ENCODE measurements at regions of chr10 and their contacts with region 1.

Region 1: DNA sequence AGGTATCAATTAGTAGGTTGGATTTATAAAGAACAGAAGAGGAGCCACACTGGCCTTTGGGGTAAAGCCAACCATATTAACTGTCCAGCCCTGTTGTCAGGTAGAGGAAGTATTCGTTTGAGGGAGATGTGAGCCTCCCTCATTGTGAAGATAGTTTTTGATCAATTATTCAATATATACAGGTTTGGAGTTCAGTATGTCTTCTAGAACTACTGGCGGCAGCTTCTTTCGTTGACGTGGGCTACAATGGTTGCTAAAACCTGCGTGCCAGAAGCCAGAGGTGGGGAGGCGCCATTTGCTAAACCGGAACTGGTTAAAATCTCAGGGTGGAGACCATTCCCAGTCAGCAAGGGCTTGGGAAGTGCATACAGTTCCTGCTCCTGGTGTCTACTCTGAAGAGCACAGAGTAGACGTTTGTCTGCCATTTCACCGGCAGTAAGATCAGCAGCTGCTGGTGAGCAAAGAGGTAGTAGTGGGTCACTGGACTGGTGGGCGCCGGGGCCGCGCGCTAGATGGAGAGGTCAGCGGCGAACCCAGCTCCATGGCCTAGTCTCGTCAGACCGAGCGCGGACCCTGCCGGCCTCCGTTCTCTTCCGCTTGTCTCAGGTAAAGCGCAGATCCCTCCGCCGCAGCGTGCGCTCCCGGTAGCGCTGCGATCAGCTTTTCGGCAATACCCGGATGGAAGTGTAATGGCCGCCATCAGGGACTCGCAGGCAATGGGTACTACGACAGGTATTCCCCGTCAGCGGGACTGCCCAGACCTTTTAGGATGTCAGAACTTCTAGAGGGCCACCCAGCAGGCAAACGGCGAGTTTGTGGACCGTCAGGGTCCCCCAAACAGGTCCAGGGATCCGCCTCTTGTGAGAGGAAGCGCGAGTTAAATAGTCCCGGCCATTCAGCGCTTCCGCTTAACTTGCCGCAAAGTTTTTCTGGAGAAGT is at the start of gene ZNF518A:
- DNase-seq: peak; percentile 96
- H3K4me3 ChIP-seq: peak within 1 kb of the TSS; percentile 70 to 81 (median 74)
- H3K27ac ChIP-seq: peak within 1 kb of the TSS; percentile 90 to 94 (median 92)
- H3K4me1 ChIP-seq: peaks cover 0 to 13% (median 9%) of the 10 kb centered on the region in 4 donors
- H3K27me3 ChIP-seq: peaks cover 0 to 43% (median 27%) of the 10 kb centered on the region in 3 donors
- CTCF ChIP-seq: no peak
- EP300 ChIP-seq: no peak
- POLR2A ChIP-seq: no peak
- total RNA-seq, gene ZNF518A: 13.2 to 22.8 (median 17.2) TPM

Region 2: DNA sequence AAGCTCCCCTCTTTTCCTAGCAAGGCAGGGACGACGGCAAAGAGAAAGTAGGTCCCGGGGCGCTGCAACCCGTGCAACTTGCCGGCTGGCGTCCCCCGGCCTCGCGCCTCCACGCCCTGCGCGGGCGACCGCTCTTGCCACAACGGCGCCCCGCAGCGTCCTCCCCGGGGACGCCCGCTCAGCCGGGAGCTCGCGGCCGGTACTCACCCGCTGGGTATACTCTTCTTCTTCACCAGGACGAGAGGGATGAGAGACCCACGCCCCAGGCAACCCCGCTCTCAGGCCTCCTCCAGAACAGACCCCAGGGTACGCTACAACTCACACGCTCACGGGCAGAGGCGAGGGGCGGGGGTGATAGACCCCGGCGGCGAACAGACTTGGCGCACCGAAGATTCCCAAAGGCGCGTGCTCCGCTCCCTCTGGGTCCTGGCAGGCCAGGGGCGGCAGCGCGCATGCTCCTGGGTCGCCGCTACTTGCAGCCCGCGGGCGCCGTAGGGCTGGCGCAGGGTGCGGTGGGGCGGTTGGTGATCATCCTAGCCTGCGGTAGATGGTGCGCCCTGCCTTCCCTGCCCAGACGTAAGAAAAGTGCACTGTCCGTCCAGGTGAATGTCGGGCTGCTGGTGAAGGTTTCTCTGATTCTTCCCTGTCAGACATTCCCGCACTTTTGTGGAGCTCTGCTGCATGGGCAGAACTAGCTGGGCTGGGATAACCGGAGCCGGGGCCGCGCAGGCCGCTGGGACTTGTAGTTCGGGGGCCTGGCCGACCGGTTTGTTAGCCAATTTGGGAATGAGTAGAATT is 222.0 kb before region 1 on chr10 and contains the start of gene CC2D2B:
- intact Hi-C with region 1: loop called (anchors 2 kb)
- DNase-seq: peak; percentile 90
- H3K4me3 ChIP-seq: peak within 1 kb of the TSS; percentile 43 to 70 (median 64)
- H3K27ac ChIP-seq: peak within 1 kb of the TSS; percentile 85 to 93 (median 90)
- H3K4me1 ChIP-seq: peaks cover 0 to 10% (median 4%) of the 10 kb centered on the region in 4 donors
- H3K27me3 ChIP-seq: no peaks in the 10 kb centered on the region
- CTCF ChIP-seq: no peak
- EP300 ChIP-seq: no peak
- POLR2A ChIP-seq: no peak
- total RNA-seq, gene CC2D2B: 1.5 to 7.8 (median 4.8) TPM

Region 3: GRCh38 chr10:96017191-96017687 is 112.4 kb before region 1 on chr10:
- intact Hi-C with region 1: loop called (anchors 5 kb)
- DNase-seq: no peak
- H3K4me3 ChIP-seq: no peak overlapping the region
- H3K27ac ChIP-seq: no peak overlapping the region
- H3K4me1 ChIP-seq: peaks cover 0 to 10% (median 7%) of the 10 kb centered on the region in 4 donors
- H3K27me3 ChIP-seq: no peaks in the 10 kb centered on the region
- CTCF ChIP-seq: peak; percentile 47 to 71 (median 58)
- EP300 ChIP-seq: peak in 2 of 4 donors; percentile 48 to 49
- POLR2A ChIP-seq: no peak

Region 4: DNA sequence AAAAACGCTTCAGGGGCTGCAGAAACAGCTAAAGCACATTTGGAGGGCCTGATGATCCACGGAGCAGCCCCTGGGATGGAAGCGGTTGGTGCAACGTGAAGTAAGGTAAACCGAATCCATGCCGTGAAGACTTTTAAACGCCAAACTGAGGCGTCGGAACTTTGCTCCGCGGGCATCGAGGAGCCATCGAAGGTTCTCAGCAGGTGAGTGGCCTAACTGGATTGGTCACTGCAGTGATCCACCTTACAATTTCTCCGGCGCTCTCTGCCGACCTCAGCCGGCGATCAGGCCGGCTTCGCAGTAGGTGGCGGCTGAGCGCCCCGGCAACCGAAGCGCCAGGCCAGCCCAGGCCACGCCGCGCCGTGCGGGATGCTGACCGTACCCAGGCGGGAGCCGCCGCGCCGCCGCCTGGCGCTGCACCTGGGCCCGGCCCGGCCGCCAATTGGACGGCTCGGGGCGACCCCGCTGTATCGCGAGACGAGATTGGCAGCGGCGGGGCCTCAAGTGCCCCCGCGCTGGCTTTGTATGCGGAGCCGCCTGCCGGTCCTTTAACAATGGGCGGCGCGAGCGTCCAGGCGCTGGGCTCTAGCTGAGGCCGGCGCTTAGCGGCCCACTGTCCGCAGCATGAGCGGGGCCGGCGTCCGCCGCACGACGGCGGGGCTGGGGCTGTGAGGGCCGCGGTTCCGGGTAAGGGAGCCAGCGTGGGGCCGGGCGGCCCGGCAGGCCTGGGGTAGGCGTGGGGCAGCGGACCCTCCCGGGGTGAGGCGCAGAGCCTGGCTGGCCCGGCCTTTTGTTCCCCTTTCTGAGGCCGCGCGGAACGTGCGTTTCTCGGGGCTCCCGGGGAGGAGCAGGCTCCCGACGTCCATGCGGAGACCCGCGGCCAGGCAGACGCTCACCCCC is 86.4 kb before region 1 on chr10 and contains the start of gene CCNJ:
- intact Hi-C with region 1: loop called (anchors 1 kb)
- DNase-seq: peak; percentile 94
- H3K4me3 ChIP-seq: peak within 1 kb of the TSS; percentile 65 to 79 (median 70)
- H3K27ac ChIP-seq: peak within 1 kb of the TSS; percentile 83 to 93 (median 88)
- H3K4me1 ChIP-seq: peaks cover 0 to 21% (median 10%) of the 10 kb centered on the region in 4 donors
- H3K27me3 ChIP-seq: no peaks in the 10 kb centered on the region
- CTCF ChIP-seq: peak in 2 of 4 experiments; percentile 11 to 30
- EP300 ChIP-seq: no peak
- POLR2A ChIP-seq: peak in 1 of 2 donors; percentile 42
- total RNA-seq, gene CCNJ: 3.3 to 6.4 (median 4.6) TPM

Region 5: GRCh38 chr10:96089670-96090462 is 39.8 kb before region 1 on chr10:
- intact Hi-C with region 1: loop called (anchors 1 kb)
- DNase-seq: peak; percentile 96
- H3K4me3 ChIP-seq: peak overlapping the region; percentile 62 to 83 (median 66)
- H3K27ac ChIP-seq: peak overlapping the region; percentile 84 to 91 (median 87)
- H3K4me1 ChIP-seq: no peaks in the 10 kb centered on the region
- H3K27me3 ChIP-seq: peaks cover 0 to 27% (median 17%) of the 10 kb centered on the region in 3 donors
- CTCF ChIP-seq: no peak
- EP300 ChIP-seq: peak in 1 of 4 donors; percentile 27
- POLR2A ChIP-seq: no peak